Left cardiac atrium (tissue), 4 donors: ENCODE measurements at regions of chr9 and their contacts with region 1.

Region 1: DNA sequence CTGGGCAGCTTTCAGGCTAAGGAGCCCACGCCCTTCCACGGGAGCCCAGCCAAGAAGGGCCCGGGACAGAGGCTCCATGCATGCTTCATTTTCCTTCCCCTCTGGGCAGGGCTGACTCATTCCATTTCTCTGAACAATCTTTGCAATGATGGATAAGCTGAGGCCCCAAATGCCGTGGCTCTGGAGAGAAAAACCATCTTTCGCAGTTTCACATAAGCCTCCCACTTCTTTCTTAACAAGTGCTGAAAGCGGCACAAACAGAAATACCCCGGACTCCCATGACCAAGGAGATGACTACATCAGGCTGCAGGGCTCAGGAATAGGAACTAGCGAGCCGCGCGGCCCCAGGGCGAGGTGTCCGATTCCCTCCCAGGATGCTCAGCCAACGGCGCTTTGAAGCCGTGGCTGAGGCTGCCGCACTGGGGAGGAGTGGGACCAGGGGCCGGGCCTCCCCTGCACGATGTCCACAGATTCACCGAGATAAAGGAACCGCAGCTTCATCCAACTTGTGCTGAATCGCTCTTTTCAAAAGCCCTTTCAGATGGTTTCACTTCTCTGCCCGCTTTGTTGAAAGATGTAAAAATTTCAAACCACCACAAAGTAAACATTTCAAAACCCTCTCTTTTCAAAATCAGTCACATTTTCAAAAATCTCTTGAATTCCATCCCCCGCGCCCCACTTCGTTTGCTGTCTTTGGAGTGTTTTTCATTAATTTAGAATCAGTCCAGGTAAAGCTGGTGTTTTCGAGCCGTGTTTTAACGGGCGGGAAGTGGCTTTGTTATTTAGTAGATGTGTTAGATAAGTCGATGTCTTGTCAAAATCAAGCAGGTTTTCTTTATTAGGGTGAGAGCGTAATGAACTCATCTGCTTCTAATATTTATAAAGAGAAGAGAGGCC is 96.5 kb upstream of the LMX1B start:
- DNase-seq: peak; percentile 85
- ATAC-seq: peak; percentile 70 to 84

Region 2: GRCh38 chr9:126558051-126558665 is 41.0 kb after region 1 on chr9:
- intact Hi-C with region 1: loop called in 1 of 2 experiments (anchors 5 kb)
- DNase-seq: peak; percentile 57
- ATAC-seq: peak; percentile 74 to 76